GM12878 (cell line): ENCODE measurements at regions of chr20 and their contacts with region 1.

Region 1: DNA sequence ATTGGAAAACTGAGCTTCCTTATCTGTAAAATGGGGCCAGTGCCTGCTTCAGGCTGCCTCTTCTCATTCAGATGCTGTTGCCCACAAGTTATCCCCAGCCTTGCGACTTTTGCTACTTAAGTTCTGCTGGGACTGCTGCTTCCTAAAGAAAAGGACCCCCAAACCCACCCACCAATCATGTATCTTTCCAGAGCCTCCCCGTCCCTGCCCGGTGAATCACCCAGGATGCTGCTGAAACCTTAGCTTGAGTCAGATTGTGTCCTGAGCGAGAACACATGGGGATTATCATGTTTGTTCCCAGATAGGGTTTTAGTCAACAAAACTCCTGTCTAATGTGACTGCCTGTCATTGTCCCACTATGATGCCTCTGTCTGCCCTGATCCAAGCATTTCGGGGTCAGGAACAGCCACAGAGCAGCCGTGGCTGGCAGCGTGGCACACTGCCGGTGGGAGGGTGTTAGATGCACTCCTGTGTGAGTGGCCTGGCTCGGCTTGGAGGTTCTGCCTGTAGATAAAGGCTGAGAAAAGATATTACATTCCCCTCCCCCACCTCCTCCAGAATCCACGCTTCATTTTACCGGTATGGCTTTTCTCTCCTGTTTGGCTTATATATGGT is 79.9 kb downstream of the TOX2 start:
- DNase-seq: no peak
- ATAC-seq: no peak
- H3K4me3 ChIP-seq: no peak overlapping the region
- H3K27ac ChIP-seq: no peak overlapping the region
- H3K4me1 ChIP-seq: no peaks in the 10 kb centered on the region
- H3K27me3 ChIP-seq: no peaks in the 10 kb centered on the region
- CTCF ChIP-seq: no peak
- EP300 ChIP-seq: no peak
- POLR2A ChIP-seq: no peak
- RAD21 ChIP-seq: no peak

Region 2: DNA sequence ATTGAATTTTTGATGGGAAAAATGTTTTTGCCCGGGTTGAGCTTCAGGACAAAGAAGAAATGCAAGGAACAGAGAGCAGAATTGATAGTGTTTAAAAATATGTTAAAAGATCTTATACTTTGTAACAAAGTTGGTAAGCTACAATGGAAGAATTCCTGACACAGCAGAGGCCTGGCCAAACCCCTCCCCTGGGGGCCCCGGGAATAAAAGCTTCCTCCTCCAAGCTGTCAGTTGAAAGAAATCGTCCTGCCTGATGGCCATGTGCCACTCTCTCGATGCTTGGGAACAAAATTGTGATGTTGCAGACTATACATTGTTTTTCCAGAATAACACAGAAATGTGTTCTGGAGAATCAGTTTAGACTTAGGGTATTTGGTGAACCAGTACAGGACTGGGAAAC is 94.1 kb before region 1 on chr20:
- CTCF ChIA-PET with region 1: no interaction called
- POLR2A ChIA-PET with region 1: interaction called, 10 read pairs
- RAD21 ChIA-PET with region 1: no interaction called
- SMC1A ChIA-PET with region 1: no interaction called
- in situ Hi-C with region 1: no loop called
- intact Hi-C with region 1: no loop called
- DNase-seq: no peak
- ATAC-seq: no peak
- H3K4me3 ChIP-seq: no peak overlapping the region
- H3K27ac ChIP-seq: no peak overlapping the region
- H3K4me1 ChIP-seq: no peaks in the 10 kb centered on the region
- H3K27me3 ChIP-seq: no peaks in the 10 kb centered on the region
- CTCF ChIP-seq: no peak
- EP300 ChIP-seq: no peak
- POLR2A ChIP-seq: no peak
- RAD21 ChIP-seq: no peak

Region 3: GRCh38 chr20:43983359-43983758 is 11.2 kb before region 1 on chr20:
- CTCF ChIA-PET with region 1: interaction called, 7 read pairs
- POLR2A ChIA-PET with region 1: interaction called, 6 read pairs
- RAD21 ChIA-PET with region 1: interaction called, 7 read pairs
- SMC1A ChIA-PET with region 1: interaction called, 32 read pairs
- in situ Hi-C with region 1: no loop called
- intact Hi-C with region 1: no loop called
- DNase-seq: no peak
- ATAC-seq: no peak
- H3K4me3 ChIP-seq: no peak overlapping the region
- H3K27ac ChIP-seq: no peak overlapping the region
- H3K4me1 ChIP-seq: peaks cover 3% of the 10 kb centered on the region
- H3K27me3 ChIP-seq: no peaks in the 10 kb centered on the region
- CTCF ChIP-seq: peak; percentile 8 to 40 (median 32); a peak in 3 of 6 replicates
- EP300 ChIP-seq: no peak
- POLR2A ChIP-seq: no peak
- RAD21 ChIP-seq: no peak